MCF 10A (cell line): ENCODE measurements at regions of chr4 and their contacts with region 1.

Region 1: DNA sequence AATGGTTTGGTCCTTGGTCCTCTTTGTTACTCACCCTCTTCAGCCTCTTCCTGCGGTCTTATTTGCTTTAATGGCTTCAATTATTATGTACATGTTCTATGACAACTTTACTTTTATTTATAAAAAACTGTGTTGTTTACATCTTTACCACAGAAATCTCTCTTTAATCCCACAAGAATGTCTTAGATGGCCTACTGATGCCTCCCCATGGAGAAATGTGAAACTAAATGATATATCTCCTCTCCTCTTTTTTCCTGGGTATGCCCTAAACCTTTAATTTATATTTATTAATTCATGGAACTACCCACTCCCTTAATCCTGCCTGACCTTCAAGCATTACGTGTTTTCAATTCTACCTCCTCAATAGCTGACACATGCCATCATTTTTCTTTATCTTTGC is 573.2 kb downstream of the CENPC start:
- DNase-seq: no peak
- H3K4me3 Mint-ChIP-seq: no peak overlapping the region
- H3K27ac Mint-ChIP-seq: no peak overlapping the region
- H3K4me1 Mint-ChIP-seq: no peaks in the 10 kb centered on the region
- H3K27me3 Mint-ChIP-seq: no peaks in the 10 kb centered on the region
- CTCF ChIP-seq: peak; percentile 15

Region 2: DNA sequence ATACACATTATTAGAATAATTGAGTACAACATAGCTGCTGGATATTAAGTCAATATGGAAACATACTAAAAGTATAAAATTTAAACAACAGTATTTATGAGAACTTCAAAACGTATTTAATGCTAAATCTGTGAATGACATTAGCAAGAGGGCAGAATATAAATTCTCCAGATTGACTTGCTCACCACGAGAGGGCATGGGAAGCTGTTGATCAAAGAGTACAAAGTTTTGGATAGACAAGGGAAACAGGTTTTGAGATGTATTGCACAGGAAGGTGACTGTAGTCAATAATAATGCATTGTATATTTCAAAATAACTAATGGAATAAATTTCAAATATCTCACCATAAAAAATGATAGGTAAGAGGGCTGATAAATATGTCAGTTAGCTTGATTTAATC is 195.0 kb before region 1 on chr4:
- CTCF ChIA-PET with region 1: no interaction called
- POLR2A ChIA-PET with region 1: no interaction called
- intact Hi-C with region 1: loop called (anchors 5 kb)
- DNase-seq: peak; percentile 6
- H3K4me3 Mint-ChIP-seq: no peak overlapping the region
- H3K27ac Mint-ChIP-seq: no peak overlapping the region
- H3K4me1 Mint-ChIP-seq: no peaks in the 10 kb centered on the region
- H3K27me3 Mint-ChIP-seq: no peaks in the 10 kb centered on the region
- CTCF ChIP-seq: peak; percentile 18

Region 3: GRCh38 chr4:66959207-66959606 is 12.9 kb before region 1 on chr4:
- CTCF ChIA-PET with region 1: no interaction called
- POLR2A ChIA-PET with region 1: no interaction called
- intact Hi-C with region 1: no loop called
- DNase-seq: no peak
- H3K4me3 Mint-ChIP-seq: no peak overlapping the region
- H3K27ac Mint-ChIP-seq: no peak overlapping the region
- H3K4me1 Mint-ChIP-seq: no peaks in the 10 kb centered on the region
- H3K27me3 Mint-ChIP-seq: no peaks in the 10 kb centered on the region
- CTCF ChIP-seq: no peak

Region 4: GRCh38 chr4:67320645-67321044 is 348.6 kb after region 1 on chr4:
- CTCF ChIA-PET with region 1: no interaction called
- POLR2A ChIA-PET with region 1: no interaction called
- intact Hi-C with region 1: no loop called
- DNase-seq: peak; percentile 43
- H3K4me3 Mint-ChIP-seq: no peak overlapping the region
- H3K27ac Mint-ChIP-seq: no peak overlapping the region
- H3K4me1 Mint-ChIP-seq: peaks cover 9% of the 10 kb centered on the region
- H3K27me3 Mint-ChIP-seq: no peaks in the 10 kb centered on the region
- CTCF ChIP-seq: no peak

Region 5: DNA sequence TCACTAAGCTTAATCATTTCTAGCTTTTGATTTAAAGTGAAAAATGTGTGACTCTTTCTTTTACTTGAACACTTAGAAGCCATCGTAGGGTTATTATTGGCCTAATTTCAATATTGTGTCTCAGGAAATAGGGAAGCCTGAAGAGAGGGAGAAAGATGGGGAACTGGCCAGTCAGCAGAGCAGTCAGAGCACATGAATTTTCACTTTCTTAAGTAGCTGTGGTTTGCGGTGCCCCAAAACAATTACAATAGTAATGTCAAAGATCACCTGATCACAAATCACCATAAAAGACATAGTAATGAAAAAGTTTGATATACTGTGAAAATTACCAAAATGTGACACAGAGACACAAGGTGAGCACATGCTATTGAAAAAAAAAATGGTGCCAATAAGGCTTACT is 527.7 kb after region 1 on chr4:
- CTCF ChIA-PET with region 1: no interaction called
- POLR2A ChIA-PET with region 1: no interaction called
- intact Hi-C with region 1: no loop called
- DNase-seq: no peak
- H3K4me3 Mint-ChIP-seq: no peak overlapping the region
- H3K27ac Mint-ChIP-seq: no peak overlapping the region
- H3K4me1 Mint-ChIP-seq: no peaks in the 10 kb centered on the region
- H3K27me3 Mint-ChIP-seq: no peaks in the 10 kb centered on the region
- CTCF ChIP-seq: no peak